H1 (cell line): ENCODE measurements at regions of chr12 and their contacts with region 1.

Region 1: GRCh38 chr12:13740150-13740547 is 241.3 kb downstream of the GRIN2B start:
- DNase-seq: no peak
- H3K4me3 ChIP-seq: no peak overlapping the region
- H3K27ac ChIP-seq: no peak overlapping the region
- H3K4me1 ChIP-seq: peaks cover 0 to 4% (median 2%) of the 10 kb centered on the region in 4 experiments; a peak in 3 of 7 replicates
- H3K27me3 ChIP-seq: no peaks in the 10 kb centered on the region; a peak in 2 of 7 replicates
- CTCF ChIP-seq: no peak
- EP300 ChIP-seq: no peak
- POLR2A ChIP-seq: no peak
- RAD21 ChIP-seq: no peak

Region 2: DNA sequence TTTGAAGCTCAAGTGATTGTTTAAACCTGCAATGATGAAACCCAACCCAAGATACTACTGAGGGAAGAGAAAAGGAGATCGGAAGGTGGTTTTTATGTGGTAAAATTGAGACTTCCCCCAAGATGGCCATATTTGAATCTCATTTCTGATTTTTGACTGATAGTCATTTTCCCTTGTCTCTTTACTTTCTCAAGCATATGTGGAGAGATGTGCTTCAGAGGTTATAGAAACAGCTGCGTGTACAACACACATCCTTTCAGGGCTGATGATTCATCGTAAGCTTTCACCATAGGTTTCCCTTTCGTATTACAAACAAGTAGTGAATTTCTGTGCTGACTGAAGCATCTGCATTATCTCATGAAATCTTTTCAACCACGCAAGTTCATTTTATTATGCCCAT is 267.5 kb before region 1 on chr12:
- CTCF ChIA-PET with region 1: no interaction called
- POLR2A ChIA-PET with region 1: no interaction called
- DNase-seq: no peak
- H3K4me3 ChIP-seq: no peak overlapping the region
- H3K27ac ChIP-seq: no peak overlapping the region
- H3K4me1 ChIP-seq: no peaks in the 10 kb centered on the region
- H3K27me3 ChIP-seq: no peaks in the 10 kb centered on the region
- CTCF ChIP-seq: no peak
- EP300 ChIP-seq: no peak
- POLR2A ChIP-seq: no peak
- RAD21 ChIP-seq: no peak

Region 3: GRCh38 chr12:13680916-13681315 is 59.2 kb before region 1 on chr12:
- CTCF ChIA-PET with region 1: no interaction called
- POLR2A ChIA-PET with region 1: no interaction called
- DNase-seq: no peak
- H3K4me3 ChIP-seq: no peak overlapping the region
- H3K27ac ChIP-seq: no peak overlapping the region
- H3K4me1 ChIP-seq: no peaks in the 10 kb centered on the region
- H3K27me3 ChIP-seq: no peaks in the 10 kb centered on the region
- CTCF ChIP-seq: no peak
- EP300 ChIP-seq: no peak
- POLR2A ChIP-seq: no peak
- RAD21 ChIP-seq: no peak

Region 4: DNA sequence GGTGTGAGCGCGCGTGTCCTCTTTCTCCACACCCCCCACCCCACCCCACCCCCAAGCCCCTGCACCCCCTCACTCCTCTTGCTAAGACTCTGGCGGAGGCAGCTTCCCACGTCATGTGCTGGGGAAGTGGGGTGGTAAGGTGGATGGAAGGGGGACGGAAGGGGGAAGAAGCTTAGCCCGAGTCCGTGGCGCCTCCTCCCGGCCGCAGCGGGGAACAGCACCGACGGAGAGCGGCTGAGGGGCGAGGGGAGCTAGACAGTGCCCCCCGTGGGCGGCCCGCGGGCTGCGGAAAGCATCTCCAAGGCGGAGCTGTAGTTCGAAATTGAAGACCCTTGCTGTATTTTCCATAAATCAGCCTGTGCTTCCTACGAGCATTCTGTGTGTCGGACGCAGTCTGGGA is 241.8 kb after region 1 on chr12:
- CTCF ChIA-PET with region 1: interaction called, 10 read pairs
- POLR2A ChIA-PET with region 1: no interaction called
- DNase-seq: peak in 1 of 2 experiments; percentile 96
- H3K4me3 ChIP-seq: peak overlapping the region; percentile 66 to 89 (median 81)
- H3K27ac ChIP-seq: no peak overlapping the region
- H3K4me1 ChIP-seq: no peaks in the 10 kb centered on the region; a peak in 2 of 7 replicates
- H3K27me3 ChIP-seq: peaks cover 8 to 36% (median 25%) of the 10 kb centered on the region in 4 experiments
- CTCF ChIP-seq: peak; percentile 87 to 99 (median 95)
- EP300 ChIP-seq: no peak
- POLR2A ChIP-seq: no peak
- RAD21 ChIP-seq: peak; percentile 84 to 86